A673 (cell line): ENCODE measurements at regions of chr15 and their contacts with region 1.

Region 1: GRCh38 chr15:90869601-90870353 is 1.4 kb downstream of the FURIN start:
- DNase-seq: peak; percentile 94
- H3K4me3 ChIP-seq: no peak overlapping the region
- H3K27ac ChIP-seq: peak overlapping the region; percentile 90
- H3K4me1 ChIP-seq: peaks cover 45% of the 10 kb centered on the region
- H3K27me3 ChIP-seq: no peaks in the 10 kb centered on the region
- CTCF ChIP-seq: no peak

Region 2: GRCh38 chr15:90660195-90660998 is 209.4 kb before region 1 on chr15:
- CTCF ChIA-PET with region 1: no interaction called
- POLR2A ChIA-PET with region 1: no interaction called
- intact Hi-C with region 1: loop called (anchors 5 kb)
- DNase-seq: peak; percentile 84
- H3K4me3 ChIP-seq: no peak overlapping the region
- H3K27ac ChIP-seq: peak overlapping the region; percentile 17
- H3K4me1 ChIP-seq: peaks cover 45% of the 10 kb centered on the region
- H3K27me3 ChIP-seq: no peaks in the 10 kb centered on the region
- CTCF ChIP-seq: no peak

Region 3: DNA sequence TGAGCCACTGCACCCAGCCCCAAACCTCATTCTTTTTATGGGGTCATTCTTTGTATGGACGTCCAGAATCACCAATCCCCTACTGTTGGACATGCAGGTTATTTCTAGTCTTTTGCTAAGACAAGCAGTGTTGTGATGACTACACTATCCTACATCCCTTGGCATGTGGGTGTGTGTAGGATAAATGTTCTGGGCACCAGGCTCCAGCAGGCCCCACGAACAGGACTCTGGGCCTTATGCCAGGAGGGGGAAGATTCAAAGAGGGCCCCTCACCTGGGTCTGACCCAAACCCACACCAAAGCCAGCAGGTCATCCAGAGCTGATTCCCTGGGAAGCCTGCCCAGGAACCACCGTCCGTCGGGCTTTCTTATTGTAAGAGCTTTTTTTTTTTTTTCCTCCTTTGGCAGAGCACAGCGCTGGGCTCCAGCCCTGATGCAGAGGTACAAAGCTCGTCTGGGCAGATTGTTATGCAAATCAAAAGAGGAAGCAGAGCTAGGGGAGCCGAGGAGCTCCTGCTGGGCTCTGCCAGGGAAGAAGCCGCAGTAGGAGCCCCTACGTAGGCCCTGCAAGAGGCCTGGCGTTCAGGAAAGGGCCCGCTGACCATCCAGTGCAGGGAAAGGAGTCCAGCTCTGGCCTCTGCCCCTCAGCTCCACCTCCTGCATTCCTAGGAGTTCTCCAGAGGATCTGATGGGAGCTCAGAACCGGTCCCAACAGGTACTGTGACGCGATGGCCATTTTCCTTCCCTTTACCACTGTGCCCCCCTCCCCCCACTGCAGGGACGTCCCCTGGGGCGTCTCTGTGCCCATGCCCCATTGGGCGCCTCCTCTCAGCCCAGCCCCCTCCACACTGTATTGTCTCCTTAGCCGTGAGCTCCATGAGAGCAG is 30.3 kb before region 1 on chr15:
- CTCF ChIA-PET with region 1: no interaction called
- POLR2A ChIA-PET with region 1: no interaction called
- intact Hi-C with region 1: loop called (anchors 2 kb)
- DNase-seq: peak; percentile 93
- H3K4me3 ChIP-seq: peak overlapping the region; percentile 3
- H3K27ac ChIP-seq: peak overlapping the region; percentile 51
- H3K4me1 ChIP-seq: peaks cover 16% of the 10 kb centered on the region
- H3K27me3 ChIP-seq: no peaks in the 10 kb centered on the region
- CTCF ChIP-seq: no peak

Region 4: DNA sequence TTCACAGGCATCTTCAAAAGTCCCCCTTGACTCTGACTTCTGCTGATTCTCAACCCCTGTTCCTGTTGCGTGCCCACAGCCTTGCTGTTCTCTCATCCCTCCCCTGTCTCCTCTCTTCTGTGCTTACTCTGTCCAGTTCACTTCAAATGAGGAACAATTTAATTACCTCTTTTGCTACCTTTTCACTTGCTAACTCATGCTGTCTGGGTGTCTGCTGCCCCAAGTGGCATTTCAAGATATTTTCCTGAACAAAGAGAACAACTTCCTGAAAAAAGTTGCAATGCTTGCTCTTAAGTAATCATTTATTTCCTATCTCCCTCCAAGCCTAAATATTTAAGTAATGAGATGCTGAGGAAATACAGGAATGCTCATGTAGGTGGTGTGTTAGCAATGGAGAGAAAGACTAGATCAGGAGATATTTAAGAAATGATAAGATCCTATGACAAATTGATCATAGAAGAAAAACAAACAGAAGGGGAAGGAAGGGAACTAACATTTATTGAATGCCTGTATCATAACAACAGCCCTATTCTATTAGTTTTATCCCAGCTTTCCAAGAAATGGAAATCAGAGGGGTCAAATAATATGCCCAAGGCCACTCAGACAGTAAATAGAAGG is 272.4 kb after region 1 on chr15:
- CTCF ChIA-PET with region 1: no interaction called
- POLR2A ChIA-PET with region 1: no interaction called
- intact Hi-C with region 1: no loop called
- DNase-seq: peak; percentile 8
- H3K4me3 ChIP-seq: no peak overlapping the region
- H3K27ac ChIP-seq: no peak overlapping the region
- H3K4me1 ChIP-seq: no peaks in the 10 kb centered on the region
- H3K27me3 ChIP-seq: no peaks in the 10 kb centered on the region
- CTCF ChIP-seq: peak; percentile 60